AG04449 (cell line): ENCODE measurements at regions of chr19 and their contacts with region 1.

Region 1: DNA sequence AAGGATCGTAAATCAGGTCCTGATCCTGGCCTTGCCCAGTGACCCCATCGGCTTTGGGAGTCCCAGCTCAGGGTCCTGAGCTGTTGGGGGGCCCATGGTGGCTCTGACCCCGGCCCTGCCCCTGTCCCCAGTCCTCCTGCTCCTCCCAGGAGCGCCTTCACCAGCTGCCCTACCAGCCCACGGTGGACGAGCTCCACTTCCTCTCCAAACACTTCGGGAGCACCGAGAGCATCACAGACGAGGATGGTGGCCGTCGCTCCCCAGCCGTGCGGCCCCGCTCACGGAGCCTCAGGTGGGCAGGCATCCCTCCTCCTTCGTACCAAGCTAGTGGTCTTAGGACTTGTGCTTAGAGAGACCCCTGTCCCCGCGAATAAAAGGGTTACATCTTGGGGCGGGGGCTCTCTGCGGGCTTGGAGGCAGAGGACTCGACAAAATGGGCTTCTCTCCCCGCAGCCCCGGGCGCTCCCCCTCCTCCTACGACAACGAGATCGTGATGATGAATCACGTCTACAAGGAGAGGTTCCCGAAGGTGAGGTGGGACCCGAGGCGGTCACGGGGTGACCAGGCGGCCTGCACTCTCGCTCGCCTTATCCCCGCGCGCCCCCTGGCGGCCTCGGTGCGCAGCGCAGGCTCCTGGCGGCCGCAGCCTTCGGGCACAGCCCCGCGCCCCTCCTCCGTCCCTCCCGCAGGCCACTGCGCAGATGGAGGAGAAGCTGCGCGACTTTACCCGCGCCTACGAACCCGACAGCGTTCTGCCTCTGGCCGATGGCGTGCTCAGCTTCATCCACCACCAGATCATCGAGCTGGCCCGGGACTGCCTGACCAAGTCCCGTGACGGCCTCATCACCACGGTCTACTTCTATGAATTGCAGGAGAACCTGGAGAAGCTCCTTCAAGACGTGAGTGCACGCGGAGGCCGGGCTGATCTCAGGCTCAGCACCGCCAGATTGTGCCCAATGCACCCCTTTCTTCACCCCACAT is 9.1 kb downstream of the MAST1 start:
- DNase-seq: peak; percentile 5
- H3K4me3 ChIP-seq: peak overlapping the region; percentile 42
- CTCF ChIP-seq: peak; percentile 98

Region 2: DNA sequence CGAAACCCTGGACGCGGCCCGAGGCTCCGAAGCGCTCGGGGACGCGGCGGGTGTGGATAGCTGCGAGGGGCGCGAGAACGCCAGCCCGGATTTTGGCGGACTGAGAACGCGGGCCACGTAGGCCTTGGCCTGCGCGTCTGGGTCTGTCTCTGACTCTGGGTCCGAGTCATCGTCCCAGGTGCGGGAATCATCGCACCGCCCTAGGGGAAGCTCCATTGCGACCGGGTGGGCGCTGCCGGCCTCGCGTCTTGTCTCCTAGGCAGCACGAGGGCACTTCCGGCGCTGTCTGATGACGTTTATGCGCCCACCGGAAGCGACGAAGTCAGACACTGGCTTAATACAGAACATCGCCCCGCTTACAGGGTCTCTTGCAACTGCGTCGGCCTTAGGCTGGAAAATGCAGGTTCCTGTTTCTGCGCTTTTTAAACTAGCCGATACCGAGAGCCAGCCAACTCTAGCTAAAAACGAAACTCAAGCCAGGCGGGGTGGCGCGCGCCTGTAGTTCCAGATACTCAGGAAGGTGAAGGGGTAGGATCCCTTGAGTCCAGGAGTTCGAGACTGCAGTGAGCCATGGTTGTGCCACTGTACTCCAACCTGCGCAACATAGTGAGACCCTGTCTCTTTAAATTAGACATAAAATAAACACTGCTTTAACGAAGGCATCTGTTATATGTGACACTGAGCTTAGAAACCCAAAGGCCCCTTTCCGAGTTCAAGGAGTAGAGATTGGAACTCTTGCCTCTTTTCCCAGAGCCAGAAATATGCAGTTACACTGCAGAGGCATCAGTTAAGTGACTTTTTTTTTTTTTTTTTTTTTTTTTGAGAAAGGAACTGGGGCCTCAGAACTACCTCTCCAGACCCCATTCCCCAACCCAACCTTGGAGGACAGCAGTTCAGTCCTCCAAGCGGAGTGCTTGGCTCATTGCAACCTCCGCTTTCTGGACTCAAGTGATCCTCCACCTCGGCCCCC is 150.8 kb before region 1 on chr19 and contains the start of gene FBXW9:
- CTCF ChIA-PET with region 1: interaction called, 17 read pairs
- POLR2A ChIA-PET with region 1: interaction called, 3 read pairs
- DNase-seq: peak; percentile 63
- H3K4me3 ChIP-seq: peak within 1 kb of the TSS; percentile 97
- CTCF ChIP-seq: no peak

Region 3: GRCh38 chr19:12752056-12752781 is 95.2 kb before region 1 on chr19:
- CTCF ChIA-PET with region 1: interaction called, 425 read pairs
- POLR2A ChIA-PET with region 1: no interaction called
- DNase-seq: no peak
- H3K4me3 ChIP-seq: no peak overlapping the region
- CTCF ChIP-seq: no peak

Region 4: DNA sequence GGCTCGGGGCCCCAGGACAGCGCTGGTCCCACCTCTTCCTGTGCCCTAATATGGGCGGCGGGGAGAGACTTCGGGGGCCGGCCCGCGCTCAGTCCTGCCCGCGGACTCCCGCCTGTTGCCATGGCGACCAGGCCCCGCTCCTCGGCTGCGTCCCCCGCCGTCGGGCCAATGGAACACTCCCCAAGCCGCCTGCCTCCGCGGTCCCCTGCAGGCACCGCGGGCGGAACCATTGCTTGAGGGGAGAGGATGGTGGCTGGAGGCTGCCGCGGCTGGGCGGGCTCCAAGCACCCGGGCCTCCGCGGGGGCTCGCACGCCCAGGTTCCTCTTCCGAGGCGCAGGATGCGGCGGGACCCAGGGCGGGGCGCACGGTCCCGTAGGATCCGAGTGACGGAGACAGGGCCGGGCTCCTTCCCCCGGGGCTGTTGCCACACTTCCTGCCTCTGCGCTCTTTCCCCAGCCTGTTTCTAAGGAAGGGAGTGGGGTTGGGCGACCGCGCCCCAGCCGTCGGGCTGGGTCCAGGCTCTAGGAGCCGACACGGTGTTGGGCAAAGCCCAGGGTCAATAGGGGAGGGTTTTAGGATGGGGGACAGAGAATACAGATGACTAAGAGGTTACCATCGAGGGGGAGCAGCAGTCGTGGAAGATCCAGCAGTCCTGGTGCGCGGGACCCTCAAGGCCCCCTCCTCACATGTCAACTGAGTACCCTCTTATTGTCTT is 57.4 kb before region 1 on chr19:
- CTCF ChIA-PET with region 1: interaction called, 41 read pairs
- POLR2A ChIA-PET with region 1: interaction called, 4 read pairs
- DNase-seq: no peak
- H3K4me3 ChIP-seq: peak overlapping the region; percentile 55
- CTCF ChIP-seq: no peak

Region 5: GRCh38 chr19:12859546-12859945 is 12.1 kb after region 1 on chr19:
- CTCF ChIA-PET with region 1: interaction called, 46 read pairs
- POLR2A ChIA-PET with region 1: no interaction called
- DNase-seq: no peak
- H3K4me3 ChIP-seq: no peak overlapping the region
- CTCF ChIP-seq: no peak

Region 6: DNA sequence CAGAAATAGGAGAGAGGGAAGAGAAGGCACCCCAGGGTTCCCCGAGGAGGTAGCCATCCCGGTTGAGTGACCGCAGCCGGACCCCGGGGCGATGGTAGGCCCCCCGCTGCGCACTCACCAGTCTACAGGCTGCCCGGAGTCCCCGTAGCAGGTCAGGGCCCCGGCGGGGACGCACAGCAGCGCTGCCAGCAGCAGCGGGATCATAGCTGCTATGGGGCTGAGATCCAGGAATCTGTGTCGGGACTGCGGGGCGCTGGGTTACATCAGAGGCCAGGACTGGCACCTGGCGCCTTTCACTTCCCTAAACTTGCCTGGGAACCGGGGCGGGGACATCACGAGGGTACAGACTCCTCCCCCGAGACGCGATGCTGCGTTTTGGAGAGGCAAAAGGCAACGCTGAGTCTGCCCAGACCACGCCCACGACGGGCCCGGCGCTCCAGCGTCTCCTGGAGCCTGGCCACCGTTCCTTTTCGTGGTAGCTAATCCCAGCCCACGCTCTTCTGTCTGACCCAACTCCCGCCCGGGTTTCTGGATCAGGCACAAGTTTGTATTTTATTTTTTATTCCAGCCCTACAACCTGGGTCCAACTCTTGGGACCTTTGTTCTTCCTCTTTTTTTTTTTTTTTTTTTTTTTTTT is 33.8 kb after region 1 on chr19 and contains the start of gene DNASE2:
- CTCF ChIA-PET with region 1: interaction called, 24 read pairs
- POLR2A ChIA-PET with region 1: no interaction called
- DNase-seq: peak; percentile 31
- H3K4me3 ChIP-seq: peak within 1 kb of the TSS; percentile 75
- CTCF ChIP-seq: no peak